Activated T-helper 2 cell treated with anti-CD3 and anti-CD28 coated beads, Interferon-gamma antibody, Interleukin-2, Interleukin-4, amounts not matched to agents 10 μg/mL and 5 μg/mL and 100 μg/mL, durations not matched to agents 14 hours and 24 hours and 36 hours (primary cell): ENCODE measurements at regions of chr5 and their contacts with region 1.

Region 1: DNA sequence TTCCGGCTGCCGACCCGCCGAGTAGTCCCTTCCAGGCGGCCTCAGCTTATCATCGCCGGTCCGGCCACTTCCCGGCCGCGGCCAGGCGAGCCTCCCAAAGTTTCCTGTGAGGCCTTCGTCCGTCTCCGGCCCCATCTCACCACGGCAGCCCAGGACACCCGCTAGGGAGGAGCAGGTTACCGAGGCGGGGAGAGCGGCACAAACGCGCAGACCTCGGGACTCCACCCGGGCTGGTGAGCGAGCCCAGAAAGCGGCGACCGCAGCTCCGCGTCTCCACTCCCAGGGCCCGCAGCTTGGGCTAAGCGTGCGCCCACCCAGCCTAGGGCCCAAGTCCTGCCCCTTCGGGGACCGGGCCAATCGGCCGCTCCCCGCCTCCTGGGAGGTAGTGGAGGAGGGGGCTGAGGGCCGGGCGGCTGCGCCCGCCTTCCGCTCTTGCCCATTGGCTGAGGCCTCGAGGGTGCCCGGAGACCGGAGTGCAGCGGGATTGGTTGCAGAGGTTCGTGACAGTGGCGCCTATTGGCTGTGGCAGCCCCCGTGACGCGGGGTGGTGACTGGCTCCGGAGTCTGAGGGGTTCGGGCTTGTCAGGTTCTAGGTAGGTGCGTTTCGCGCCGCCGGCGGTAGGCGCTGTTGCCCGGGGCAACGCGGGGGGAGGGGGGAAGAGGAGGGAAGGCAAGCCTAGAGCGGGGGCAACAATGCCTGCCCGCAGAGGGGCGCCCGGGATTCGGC is 867 bp downstream of the FER start:
- DNase-seq: peak; percentile 96
- H3K4me3 Mint-ChIP-seq: peak overlapping the region; percentile 86
- H3K27ac Mint-ChIP-seq: peak overlapping the region; percentile 84
- H3K4me1 Mint-ChIP-seq: peaks cover 15% of the 10 kb centered on the region
- H3K27me3 Mint-ChIP-seq: peaks cover 27% of the 10 kb centered on the region

Region 2: DNA sequence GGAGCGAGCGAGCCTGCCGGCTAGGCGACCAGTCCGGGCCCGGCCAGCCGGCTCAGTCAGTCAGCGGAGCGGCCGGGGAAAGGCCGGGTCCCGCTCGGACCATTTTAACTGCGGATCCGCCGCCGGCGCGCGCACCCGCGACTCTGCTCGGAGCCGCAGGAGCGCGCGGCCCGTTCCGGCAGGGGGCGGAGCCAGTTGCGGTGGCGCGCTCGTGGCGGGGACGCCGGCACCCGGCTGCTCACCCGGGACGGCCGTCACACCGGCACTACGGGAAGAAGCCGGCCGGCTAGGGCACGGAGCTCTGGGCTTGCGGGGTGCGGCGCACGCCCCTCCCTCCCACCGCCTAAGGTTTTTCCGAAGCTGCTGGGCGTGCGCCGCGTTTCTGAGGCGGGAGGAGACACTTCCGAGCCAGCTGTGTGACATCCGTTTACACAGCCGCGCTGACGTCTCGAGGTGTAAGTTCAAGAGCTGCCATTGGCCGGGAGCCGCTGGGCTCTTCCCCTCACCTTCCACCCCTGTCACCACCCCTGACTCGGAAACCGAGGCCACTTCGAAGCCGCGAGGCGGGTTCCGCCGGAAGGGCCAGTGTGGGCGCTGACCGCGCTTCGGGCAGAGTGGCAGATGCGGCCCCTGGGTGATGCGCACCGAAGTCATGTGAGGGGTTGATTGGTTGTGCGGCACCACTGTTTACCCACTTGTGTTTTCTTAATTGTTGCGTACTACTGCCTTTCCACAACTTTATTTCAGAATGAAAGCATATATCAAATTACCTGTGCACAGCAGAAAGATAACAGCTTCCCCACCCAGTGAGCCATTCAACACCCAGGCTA is 366.4 kb before region 1 on chr5 and contains the start of gene FBXL17:
- intact Hi-C with region 1: loop called (anchors 5 kb)
- DNase-seq: peak; percentile 89
- H3K4me3 Mint-ChIP-seq: peak within 1 kb of the TSS; percentile 80
- H3K27ac Mint-ChIP-seq: peak within 1 kb of the TSS; percentile 83
- H3K4me1 Mint-ChIP-seq: peaks cover 27% of the 10 kb centered on the region
- H3K27me3 Mint-ChIP-seq: no peaks in the 10 kb centered on the region
- total RNA-seq, gene FBXL17: 7.0 and 9.3 TPM in 2 replicates

Region 3: GRCh38 chr5:108681079-108681921 is 67.3 kb before region 1 on chr5:
- intact Hi-C with region 1: loop called (anchors 5 kb)
- DNase-seq: no peak
- H3K4me3 Mint-ChIP-seq: no peak overlapping the region
- H3K27ac Mint-ChIP-seq: no peak overlapping the region
- H3K4me1 Mint-ChIP-seq: no peaks in the 10 kb centered on the region
- H3K27me3 Mint-ChIP-seq: peaks cover 8% of the 10 kb centered on the region

Region 4: GRCh38 chr5:108727651-108728565 is 20.7 kb before region 1 on chr5:
- intact Hi-C with region 1: loop called (anchors 1 kb)
- DNase-seq: peak; percentile 12
- H3K4me3 Mint-ChIP-seq: peak overlapping the region; percentile 73
- H3K27ac Mint-ChIP-seq: peak overlapping the region; percentile 30
- H3K4me1 Mint-ChIP-seq: peaks cover 30% of the 10 kb centered on the region
- H3K27me3 Mint-ChIP-seq: peaks cover 63% of the 10 kb centered on the region

Region 5: DNA sequence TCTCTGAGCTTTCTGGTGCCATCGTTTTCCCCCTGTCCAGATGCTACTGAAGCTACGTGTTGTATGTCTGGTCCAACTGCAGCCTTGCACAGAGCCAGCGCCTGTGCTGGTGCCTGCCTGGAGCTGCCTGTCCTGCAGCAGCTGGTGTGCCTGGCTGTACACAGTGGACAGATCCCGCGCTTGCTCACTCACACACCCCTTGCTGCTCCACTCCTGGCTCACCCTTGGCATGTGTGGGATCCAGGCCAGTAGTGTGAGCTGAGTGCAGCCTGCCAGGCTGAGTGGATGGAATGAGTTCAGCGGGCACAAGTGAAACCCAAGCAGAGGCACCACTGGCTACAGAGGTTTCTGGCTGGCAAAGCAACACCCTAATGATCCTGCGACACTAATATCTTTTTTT is 39.6 kb after region 1 on chr5:
- intact Hi-C with region 1: loop called (anchors 1 kb)
- DNase-seq: no peak
- H3K4me3 Mint-ChIP-seq: no peak overlapping the region
- H3K27ac Mint-ChIP-seq: no peak overlapping the region
- H3K4me1 Mint-ChIP-seq: peaks cover 6% of the 10 kb centered on the region
- H3K27me3 Mint-ChIP-seq: no peaks in the 10 kb centered on the region

Region 6: DNA sequence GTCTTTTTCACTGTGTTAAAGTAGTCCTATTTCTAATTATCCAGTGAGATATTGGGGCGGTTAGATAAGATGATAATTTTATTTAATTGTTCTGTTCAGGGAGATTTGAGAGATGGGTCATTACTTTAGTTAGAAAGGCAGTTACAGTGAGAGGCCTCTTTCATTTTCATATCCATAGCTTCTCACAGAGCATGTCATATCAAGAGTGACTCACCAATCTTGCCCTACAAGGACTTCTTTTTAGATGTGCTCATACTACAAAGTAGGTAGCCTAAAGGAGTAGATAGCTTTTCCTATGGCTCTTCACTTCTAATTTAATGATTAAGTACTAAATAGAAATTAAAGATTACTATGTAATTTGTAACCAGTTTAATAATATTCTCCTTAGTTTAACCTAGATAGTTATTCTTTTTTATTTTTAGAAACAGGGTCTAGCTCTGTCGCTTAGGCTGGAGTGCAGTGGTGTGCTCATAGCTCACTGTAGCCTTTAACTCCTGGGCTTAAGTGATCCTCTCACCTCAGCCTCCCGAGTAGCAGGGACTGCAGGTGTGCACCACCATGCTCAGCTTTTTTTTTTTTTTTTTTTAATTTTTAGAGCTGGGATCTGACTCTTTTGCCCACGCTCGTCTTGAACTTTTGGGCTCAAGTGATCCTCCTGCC is 70.2 kb after region 1 on chr5:
- intact Hi-C with region 1: loop called (anchors 2 kb)
- DNase-seq: no peak
- H3K4me3 Mint-ChIP-seq: no peak overlapping the region
- H3K27ac Mint-ChIP-seq: no peak overlapping the region
- H3K4me1 Mint-ChIP-seq: peaks cover 8% of the 10 kb centered on the region
- H3K27me3 Mint-ChIP-seq: no peaks in the 10 kb centered on the region

Region 7: GRCh38 chr5:109409844-109410388 is 661.4 kb after region 1 on chr5 and contains the start of gene PJA2:
- intact Hi-C with region 1: loop called (anchors 1 kb)
- DNase-seq: peak; percentile 96
- H3K4me3 Mint-ChIP-seq: peak within 1 kb of the TSS; percentile 95
- H3K27ac Mint-ChIP-seq: peak within 1 kb of the TSS; percentile 98
- H3K4me1 Mint-ChIP-seq: peaks cover 41% of the 10 kb centered on the region
- H3K27me3 Mint-ChIP-seq: no peaks in the 10 kb centered on the region
- total RNA-seq, gene PJA2: 52.2 and 52.9 TPM in 2 replicates